Activated CD4-positive, alpha-beta T cell treated with anti-CD3 and anti-CD28 coated beads, Interleukin-2, amount 10 ng/mL, durations not matched to agents 24 days and 14 days (primary cell): ENCODE measurements at regions of chr4 and their contacts with region 1.

Region 1: GRCh38 chr4:140103676-140104075 is 50.3 kb downstream of the MAML3 start:
- DNase-seq: peak; percentile 83
- H3K4me3 Mint-ChIP-seq: peak overlapping the region; percentile 37
- H3K27ac Mint-ChIP-seq: peak overlapping the region; percentile 79
- H3K4me1 Mint-ChIP-seq: peaks cover 51% of the 10 kb centered on the region
- H3K27me3 Mint-ChIP-seq: peaks cover 17% of the 10 kb centered on the region

Region 2: GRCh38 chr4:139535871-139536234 is 567.8 kb before region 1 on chr4:
- intact Hi-C with region 1: no loop called
- DNase-seq: no peak
- H3K4me3 Mint-ChIP-seq: no peak overlapping the region
- H3K27ac Mint-ChIP-seq: no peak overlapping the region
- H3K4me1 Mint-ChIP-seq: peaks cover 1% of the 10 kb centered on the region
- H3K27me3 Mint-ChIP-seq: no peaks in the 10 kb centered on the region

Region 3: GRCh38 chr4:140071806-140072205 is 31.9 kb before region 1 on chr4:
- intact Hi-C with region 1: loop called (anchors 1 kb)
- DNase-seq: peak; percentile 89
- H3K4me3 Mint-ChIP-seq: peak overlapping the region; percentile 73
- H3K27ac Mint-ChIP-seq: peak overlapping the region; percentile 83
- H3K4me1 Mint-ChIP-seq: peaks cover 44% of the 10 kb centered on the region
- H3K27me3 Mint-ChIP-seq: peaks cover 41% of the 10 kb centered on the region

Region 4: DNA sequence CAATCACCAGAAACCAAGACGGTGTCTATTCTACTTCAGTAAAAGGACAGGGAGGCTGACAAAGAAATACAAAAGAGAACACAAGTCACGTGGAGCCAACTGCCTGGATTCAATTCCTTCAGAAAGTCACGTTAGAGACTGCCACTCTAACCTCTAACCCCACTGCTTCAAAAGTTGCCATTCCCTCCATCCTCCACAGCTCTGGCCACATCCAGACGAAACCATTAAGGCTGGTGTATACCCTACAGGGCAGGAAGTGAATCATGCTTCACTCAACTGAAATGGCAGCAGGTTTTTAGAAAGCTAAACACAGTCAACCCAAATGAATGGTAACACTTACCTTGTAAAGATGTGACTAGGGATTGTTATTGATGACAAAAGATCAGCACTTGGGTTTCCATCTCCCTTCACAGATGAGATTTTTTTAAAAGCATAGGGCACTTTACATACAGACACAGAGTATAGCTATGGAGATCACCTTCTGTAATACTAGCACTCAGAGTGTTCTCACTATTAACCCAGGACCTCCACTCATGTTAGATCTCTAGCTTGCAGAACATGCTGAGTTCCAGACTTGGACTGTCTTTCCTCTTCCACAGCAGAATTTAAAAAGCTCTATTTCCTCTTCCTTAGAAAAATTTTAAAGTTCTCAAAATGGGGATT is 12.9 kb after region 1 on chr4:
- intact Hi-C with region 1: loop called (anchors 2 kb)
- DNase-seq: peak; percentile 80
- H3K4me3 Mint-ChIP-seq: peak overlapping the region; percentile 43
- H3K27ac Mint-ChIP-seq: peak overlapping the region; percentile 76
- H3K4me1 Mint-ChIP-seq: peaks cover 24% of the 10 kb centered on the region
- H3K27me3 Mint-ChIP-seq: peaks cover 19% of the 10 kb centered on the region

Region 5: GRCh38 chr4:140971077-140971792 is 867.6 kb after region 1 on chr4:
- intact Hi-C with region 1: no loop called
- DNase-seq: no peak
- H3K4me3 Mint-ChIP-seq: no peak overlapping the region
- H3K27ac Mint-ChIP-seq: no peak overlapping the region
- H3K4me1 Mint-ChIP-seq: no peaks in the 10 kb centered on the region
- H3K27me3 Mint-ChIP-seq: no peaks in the 10 kb centered on the region